Transverse colon (tissue), 4 donors: ENCODE measurements at regions of chr12 and their contacts with region 1.

Region 1: DNA sequence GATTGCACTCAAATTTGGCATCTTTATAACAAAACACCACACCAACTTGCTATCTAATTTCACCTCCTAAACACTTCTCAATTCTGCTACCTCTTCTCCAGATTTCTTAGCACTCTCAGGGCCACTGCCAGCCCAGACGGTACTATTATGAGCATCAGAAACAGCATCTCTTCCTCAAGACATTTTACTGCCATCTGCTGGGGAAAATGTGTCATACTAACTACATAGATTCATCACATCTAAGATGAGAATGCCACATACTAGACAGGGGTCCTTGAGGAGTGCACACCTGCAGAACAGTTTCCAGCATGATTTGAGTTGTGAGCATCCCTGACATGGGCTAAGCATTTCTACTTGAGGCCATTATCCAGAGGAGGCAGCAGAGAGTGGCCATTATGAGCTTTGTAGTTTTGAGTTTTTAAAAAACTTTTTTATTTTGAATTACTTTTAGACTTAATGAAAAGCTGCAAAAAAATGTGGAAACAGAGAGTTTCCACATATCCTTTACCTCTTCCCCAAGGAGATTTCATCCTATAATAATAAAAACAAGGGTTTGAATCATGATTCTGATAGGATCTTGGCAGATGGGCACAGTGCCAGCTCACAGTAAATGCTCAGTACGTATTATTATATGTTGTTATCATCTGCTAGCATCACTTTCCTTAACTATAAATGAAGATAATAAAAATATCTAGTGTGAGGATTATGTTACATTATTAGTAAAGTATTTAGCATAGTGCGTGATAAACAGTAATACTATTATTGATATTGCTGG is 15.2 kb upstream of the GRIP1 start:
- DNase-seq: no peak
- H3K4me3 ChIP-seq: no peak overlapping the region
- H3K27ac ChIP-seq: no peak overlapping the region
- H3K4me1 ChIP-seq: no peaks in the 10 kb centered on the region
- H3K27me3 ChIP-seq: no peaks in the 10 kb centered on the region
- CTCF ChIP-seq: peak; percentile 44 to 54 (median 47)
- EP300 ChIP-seq: no peak
- POLR2A ChIP-seq: no peak

Region 2: DNA sequence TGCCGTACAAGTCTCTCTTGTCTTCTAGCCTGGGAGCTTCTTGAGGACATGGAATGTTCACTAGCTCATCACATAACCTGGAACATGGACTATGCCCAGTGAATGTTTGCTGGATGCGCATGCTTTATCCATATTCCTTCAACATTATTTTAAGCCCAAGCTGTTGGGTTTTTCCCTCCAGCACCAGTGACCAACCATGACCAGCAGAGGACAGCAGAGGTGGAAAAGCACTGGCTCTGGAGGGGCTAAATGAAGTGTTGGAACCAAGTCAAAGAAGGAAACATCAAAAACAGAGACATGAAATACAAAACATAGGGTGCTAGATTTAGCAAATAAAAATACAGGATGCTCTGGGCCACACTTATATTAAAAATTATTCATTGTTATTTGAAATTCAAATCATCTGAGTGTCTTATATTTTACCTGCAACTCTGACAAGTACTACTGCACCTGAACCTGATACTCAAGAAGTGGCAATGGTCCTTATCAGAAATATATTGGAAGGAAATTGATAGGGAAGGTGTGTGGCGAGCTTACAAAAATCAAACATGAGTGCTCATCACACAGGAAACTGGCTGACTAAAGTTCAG is 414.9 kb before region 1 on chr12:
- in situ Hi-C with region 1: loop called in 3 of 4 experiments (anchors 25 kb)
- intact Hi-C with region 1: no loop called
- DNase-seq: no peak
- H3K4me3 ChIP-seq: no peak overlapping the region
- H3K27ac ChIP-seq: no peak overlapping the region
- H3K4me1 ChIP-seq: no peaks in the 10 kb centered on the region
- H3K27me3 ChIP-seq: no peaks in the 10 kb centered on the region
- CTCF ChIP-seq: peak; percentile 29 to 50 (median 45)
- EP300 ChIP-seq: no peak
- POLR2A ChIP-seq: no peak

Region 3: GRCh38 chr12:66860752-66861750 is 167.0 kb after region 1 on chr12:
- in situ Hi-C with region 1: loop called in 1 of 4 experiments (anchors 25 kb)
- intact Hi-C with region 1: no loop called
- DNase-seq: peak; percentile 63
- H3K4me3 ChIP-seq: no peak overlapping the region
- H3K27ac ChIP-seq: no peak overlapping the region
- H3K4me1 ChIP-seq: no peaks in the 10 kb centered on the region
- H3K27me3 ChIP-seq: no peaks in the 10 kb centered on the region
- CTCF ChIP-seq: peak; percentile 64 to 91 (median 85)
- EP300 ChIP-seq: no peak
- POLR2A ChIP-seq: no peak

Region 4: DNA sequence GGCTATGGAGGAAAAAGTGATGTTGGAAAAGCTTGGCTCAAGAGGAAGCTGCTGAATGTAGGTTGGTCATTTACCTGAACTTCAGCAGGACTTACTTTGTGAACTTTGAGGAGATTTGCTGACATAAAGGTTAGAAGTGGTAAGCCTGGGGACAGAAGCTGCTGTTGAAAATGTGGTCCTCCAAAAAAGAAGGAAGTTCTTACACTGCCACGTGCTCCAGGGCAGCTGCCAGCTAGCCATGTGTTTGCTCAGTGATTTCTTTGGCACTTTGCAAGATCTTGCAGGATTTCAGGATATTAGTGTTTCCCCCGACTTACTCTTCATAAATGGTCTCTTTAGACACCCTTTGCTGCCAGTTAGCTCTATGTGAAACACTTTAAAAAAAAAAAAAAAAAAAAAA is 939.6 kb after region 1 on chr12:
- in situ Hi-C with region 1: no loop called
- intact Hi-C with region 1: no loop called
- DNase-seq: no peak
- H3K4me3 ChIP-seq: no peak overlapping the region
- H3K27ac ChIP-seq: no peak overlapping the region
- H3K4me1 ChIP-seq: peaks cover 0 to 7% (median 0%) of the 10 kb centered on the region in 4 donors
- H3K27me3 ChIP-seq: no peaks in the 10 kb centered on the region
- CTCF ChIP-seq: no peak
- EP300 ChIP-seq: no peak
- POLR2A ChIP-seq: no peak